ENCODE measurements at regions of chr11 and their contacts with region 1.

Region 1: DNA sequence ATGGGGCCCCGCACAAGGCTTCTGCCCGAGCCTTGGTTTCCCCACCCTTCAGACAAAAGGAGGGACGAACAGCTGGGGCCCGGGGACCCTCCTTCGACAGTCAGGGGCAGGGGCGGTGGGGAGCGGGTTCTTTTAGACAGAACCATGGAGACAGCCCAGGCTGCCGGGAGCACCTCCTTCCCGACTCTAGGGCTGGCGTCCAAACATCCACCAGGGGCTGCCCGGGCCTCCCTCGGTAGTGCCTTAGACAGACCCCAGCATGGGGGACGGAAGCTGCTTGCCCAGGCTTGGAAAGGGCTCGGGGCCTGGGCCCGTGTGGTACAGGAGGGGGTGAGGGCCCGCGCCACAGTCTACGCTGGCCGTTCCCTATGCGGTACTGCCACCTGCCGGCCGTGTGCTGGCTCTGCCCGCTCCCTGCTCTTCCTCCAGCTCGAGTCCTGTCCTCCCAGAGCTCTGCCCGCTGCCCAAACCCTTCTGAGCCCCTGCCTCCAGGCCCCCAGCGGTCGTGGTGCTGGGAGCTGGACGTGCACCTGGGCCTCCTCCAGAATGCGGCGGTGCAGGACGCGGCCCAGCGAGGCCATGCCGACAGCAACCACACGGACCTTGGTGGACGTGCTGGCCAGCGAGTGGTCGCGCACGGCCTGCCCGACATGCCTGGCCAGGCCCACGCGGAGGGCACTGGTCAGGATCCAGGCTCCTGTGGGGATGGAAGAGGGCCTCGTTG is 20.1 kb downstream of the TSSC4 start:
- DNase-seq: no peak
- H3K4me3 ChIP-seq: no peak overlapping the region
- CTCF ChIP-seq: peak; percentile 94

Region 2: GRCh38 chr11:2178906-2179494 is 241.7 kb before region 1 on chr11:
- CTCF ChIA-PET with region 1: interaction called, 87 read pairs
- POLR2A ChIA-PET with region 1: no interaction called
- DNase-seq: no peak
- H3K4me3 ChIP-seq: no peak overlapping the region
- CTCF ChIP-seq: no peak

Region 3: DNA sequence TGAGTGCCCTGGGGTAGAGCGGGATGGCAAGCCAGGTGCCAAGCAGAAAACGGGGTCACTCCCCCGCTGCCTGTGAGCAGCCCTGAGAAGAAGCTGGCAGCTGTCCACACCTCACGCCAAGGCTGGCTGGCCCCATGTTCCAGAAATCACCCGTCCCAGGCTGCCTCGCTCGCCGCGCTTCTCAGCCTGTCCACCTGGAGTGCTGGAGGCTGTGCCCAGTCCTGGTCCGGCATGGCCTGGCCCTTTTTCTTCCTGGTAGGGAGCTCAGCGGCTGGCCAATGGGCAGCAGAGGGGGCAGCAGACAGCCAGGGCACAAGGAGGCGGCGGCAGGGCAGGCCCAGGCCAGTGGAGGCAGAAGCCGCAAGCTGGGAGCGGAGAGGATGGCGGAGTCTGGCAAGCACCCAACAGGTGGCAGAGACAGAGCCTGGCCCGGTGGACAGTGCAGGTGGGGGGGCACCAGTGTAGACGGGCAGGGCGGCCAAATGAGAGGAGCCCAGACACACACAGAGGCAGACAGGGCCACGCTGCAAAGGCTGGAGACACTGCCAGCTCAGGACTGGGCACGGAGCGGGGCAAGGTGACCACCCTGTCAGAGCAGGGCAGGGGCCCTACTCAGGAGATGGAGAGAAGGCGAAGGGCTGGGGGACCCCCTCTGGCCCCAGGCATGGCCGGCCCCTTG is 211.8 kb before region 1 on chr11:
- CTCF ChIA-PET with region 1: interaction called, 216 read pairs
- POLR2A ChIA-PET with region 1: no interaction called
- DNase-seq: no peak
- H3K4me3 ChIP-seq: no peak overlapping the region
- CTCF ChIP-seq: no peak

Region 4: GRCh38 chr11:2305140-2305840 is 115.4 kb before region 1 on chr11:
- CTCF ChIA-PET with region 1: interaction called, 381 read pairs
- POLR2A ChIA-PET with region 1: no interaction called
- DNase-seq: no peak
- H3K4me3 ChIP-seq: no peak overlapping the region
- CTCF ChIP-seq: peak; percentile 79

Region 5: GRCh38 chr11:2342981-2343380 is 77.7 kb before region 1 on chr11:
- CTCF ChIA-PET with region 1: no interaction called
- POLR2A ChIA-PET with region 1: no interaction called
- DNase-seq: no peak
- H3K4me3 ChIP-seq: no peak overlapping the region
- CTCF ChIP-seq: no peak

Region 6: DNA sequence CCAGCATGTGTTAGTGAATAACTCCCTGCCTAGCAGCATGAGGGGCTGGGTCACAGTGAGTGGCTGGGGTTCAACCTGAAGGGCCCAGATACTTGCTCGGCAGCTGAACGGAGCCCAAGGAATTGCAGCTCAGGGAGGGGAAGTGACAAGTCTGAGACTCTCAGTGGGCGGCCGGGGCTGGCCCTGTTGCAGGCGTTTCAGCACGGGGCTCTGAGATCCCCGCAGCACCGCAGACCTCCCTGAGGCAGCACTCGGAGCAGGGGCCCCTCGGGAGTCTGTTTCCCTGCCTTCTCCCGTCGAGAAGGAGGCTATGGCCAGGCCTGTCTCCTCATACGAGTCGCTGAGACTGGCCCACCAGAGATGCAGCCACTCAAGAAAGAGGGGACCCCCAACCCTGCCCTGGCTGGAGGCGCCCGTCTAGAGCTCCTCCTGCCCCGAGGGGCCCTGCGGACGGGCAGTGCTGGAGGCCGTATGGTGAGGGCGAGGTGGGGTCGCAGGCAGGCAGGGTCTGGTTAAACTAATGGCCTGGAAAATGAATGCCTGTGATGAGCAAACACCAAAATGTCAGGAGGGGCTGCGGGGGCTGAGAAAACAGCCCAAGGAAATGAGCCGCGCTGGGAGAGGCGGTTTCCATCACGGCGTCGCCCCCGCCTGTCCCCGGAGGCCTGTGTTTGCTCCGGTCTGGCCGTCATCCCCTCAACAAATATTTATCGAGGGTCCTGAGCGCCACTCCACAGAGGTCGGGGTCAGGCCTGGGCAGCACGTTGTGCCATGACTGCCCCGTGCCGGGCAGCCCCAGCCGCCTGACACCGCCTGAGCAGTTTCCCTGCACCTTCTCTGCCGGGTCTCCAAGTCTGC is 10.8 kb before region 1 on chr11:
- CTCF ChIA-PET with region 1: interaction called, 70 read pairs
- POLR2A ChIA-PET with region 1: no interaction called
- DNase-seq: no peak
- H3K4me3 ChIP-seq: no peak overlapping the region
- CTCF ChIP-seq: no peak

Region 7: GRCh38 chr11:2452321-2453012 is 31.8 kb after region 1 on chr11:
- CTCF ChIA-PET with region 1: no interaction called
- POLR2A ChIA-PET with region 1: no interaction called
- DNase-seq: no peak
- H3K4me3 ChIP-seq: no peak overlapping the region
- CTCF ChIP-seq: no peak

Region 8: DNA sequence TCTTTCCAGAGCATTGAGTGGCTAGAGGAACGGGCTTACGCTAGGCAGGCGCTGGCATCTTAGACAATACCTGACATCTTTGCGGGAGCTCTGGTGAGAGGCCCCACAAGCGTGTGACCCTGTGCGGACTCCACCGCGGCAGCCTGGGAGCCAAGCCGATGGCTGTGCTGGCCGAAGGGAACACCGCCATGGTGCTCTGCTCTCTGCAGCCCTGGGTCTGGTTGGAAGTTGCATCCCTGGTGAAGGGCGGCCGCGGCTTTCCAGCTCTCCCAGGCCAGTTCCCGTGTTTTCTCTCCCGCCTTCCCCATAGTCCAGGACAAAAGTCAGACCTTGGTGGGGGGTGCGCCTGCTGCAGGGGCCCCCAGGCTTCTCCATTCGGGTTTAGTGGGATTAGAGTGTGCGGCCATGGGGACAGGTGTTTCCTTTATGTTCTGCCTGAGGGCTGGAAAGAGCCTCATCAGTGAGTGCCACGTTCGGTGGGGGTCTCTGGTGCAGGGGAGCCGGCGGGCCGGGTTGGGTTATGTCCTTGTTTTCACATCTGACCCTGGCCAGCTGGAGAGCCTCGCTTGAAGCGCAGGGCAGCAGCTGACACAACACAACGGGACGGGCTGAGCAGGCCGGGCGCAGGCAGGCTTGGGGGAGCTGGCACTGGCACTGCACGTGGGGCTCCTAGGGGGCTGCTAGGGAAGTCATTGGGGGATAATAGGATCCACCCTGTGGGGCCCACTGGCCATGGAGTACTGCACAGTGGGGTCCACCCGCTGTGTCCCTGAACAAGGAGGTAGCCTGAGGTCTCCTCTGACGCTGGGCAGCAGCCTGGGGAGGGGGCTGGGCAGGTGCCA is 118.9 kb after region 1 on chr11:
- CTCF ChIA-PET with region 1: no interaction called
- POLR2A ChIA-PET with region 1: no interaction called
- DNase-seq: no peak
- H3K4me3 ChIP-seq: no peak overlapping the region
- CTCF ChIP-seq: no peak

Region 9: GRCh38 chr11:2655834-2656622 is 235.4 kb after region 1 on chr11:
- CTCF ChIA-PET with region 1: no interaction called
- POLR2A ChIA-PET with region 1: no interaction called
- DNase-seq: no peak
- H3K4me3 ChIP-seq: no peak overlapping the region
- CTCF ChIP-seq: no peak

Region 10: GRCh38 chr11:2892215-2893020 is 471.8 kb after region 1 on chr11:
- CTCF ChIA-PET with region 1: interaction called, 12 read pairs
- POLR2A ChIA-PET with region 1: no interaction called
- DNase-seq: no peak
- H3K4me3 ChIP-seq: peak overlapping the region; percentile 62
- CTCF ChIP-seq: peak; percentile 96

Measured in AG04449 (cell line).